Adrenal gland (tissue), 19 donors: ENCODE measurements at regions of chrX and their contacts with region 1.

Region 1: DNA sequence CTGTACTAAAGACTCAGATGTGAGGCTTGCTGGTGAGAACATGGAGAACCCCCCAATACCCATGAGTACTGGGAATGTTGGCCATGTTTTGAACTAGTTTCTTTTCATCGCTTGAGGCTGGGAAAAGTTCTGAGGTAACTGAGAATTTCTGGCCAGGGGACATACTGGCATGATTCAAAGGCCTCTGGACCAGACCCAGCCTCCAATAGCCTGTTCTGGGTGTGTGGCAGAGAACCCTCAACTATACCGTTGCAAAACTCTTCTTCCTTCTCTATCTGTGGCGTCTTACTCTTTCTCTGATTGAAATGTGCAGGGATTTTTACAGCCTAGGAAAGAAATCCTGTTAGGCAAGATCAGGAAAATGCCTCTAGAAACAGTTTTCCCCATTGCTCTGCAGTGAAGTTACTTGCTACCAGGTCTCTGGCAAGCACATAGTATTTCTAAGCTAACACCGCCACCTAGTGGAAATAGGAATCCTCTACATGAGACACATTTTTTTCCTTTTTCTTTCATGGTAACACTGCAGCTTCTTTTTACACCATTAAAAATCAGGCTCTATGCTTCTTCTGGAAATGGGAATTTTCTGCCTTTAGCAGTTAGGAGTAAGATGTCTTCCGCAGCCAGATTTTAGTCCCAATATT is 170.7 kb upstream of the ZCCHC13 start:
- DNase-seq: peak in 5 of 7 donors; percentile 8 to 31 (median 27)
- H3K4me3 ChIP-seq: no peak overlapping the region
- H3K27ac ChIP-seq: no peak overlapping the region
- H3K4me1 ChIP-seq: no peaks in the 10 kb centered on the region
- H3K27me3 ChIP-seq: no peaks in the 10 kb centered on the region
- CTCF ChIP-seq: peak; percentile 61 to 86 (median 75)
- POLR2A ChIP-seq: no peak

Region 2: GRCh38 chrX:73615022-73615421 is 518.3 kb before region 1 on chrX:
- intact Hi-C with region 1: no loop called
- DNase-seq: no peak
- H3K4me3 ChIP-seq: no peak overlapping the region
- H3K27ac ChIP-seq: no peak overlapping the region
- H3K4me1 ChIP-seq: no peaks in the 10 kb centered on the region
- H3K27me3 ChIP-seq: no peaks in the 10 kb centered on the region
- CTCF ChIP-seq: no peak
- POLR2A ChIP-seq: no peak

Region 3: GRCh38 chrX:74015379-74016019 is 117.8 kb before region 1 on chrX:
- intact Hi-C with region 1: no loop called
- DNase-seq: peak; percentile 62 to 83 (median 72)
- H3K4me3 ChIP-seq: no peak overlapping the region
- H3K27ac ChIP-seq: no peak overlapping the region
- H3K4me1 ChIP-seq: no peaks in the 10 kb centered on the region
- H3K27me3 ChIP-seq: no peaks in the 10 kb centered on the region
- CTCF ChIP-seq: peak; percentile 64 to 92 (median 82)
- POLR2A ChIP-seq: no peak

Region 4: DNA sequence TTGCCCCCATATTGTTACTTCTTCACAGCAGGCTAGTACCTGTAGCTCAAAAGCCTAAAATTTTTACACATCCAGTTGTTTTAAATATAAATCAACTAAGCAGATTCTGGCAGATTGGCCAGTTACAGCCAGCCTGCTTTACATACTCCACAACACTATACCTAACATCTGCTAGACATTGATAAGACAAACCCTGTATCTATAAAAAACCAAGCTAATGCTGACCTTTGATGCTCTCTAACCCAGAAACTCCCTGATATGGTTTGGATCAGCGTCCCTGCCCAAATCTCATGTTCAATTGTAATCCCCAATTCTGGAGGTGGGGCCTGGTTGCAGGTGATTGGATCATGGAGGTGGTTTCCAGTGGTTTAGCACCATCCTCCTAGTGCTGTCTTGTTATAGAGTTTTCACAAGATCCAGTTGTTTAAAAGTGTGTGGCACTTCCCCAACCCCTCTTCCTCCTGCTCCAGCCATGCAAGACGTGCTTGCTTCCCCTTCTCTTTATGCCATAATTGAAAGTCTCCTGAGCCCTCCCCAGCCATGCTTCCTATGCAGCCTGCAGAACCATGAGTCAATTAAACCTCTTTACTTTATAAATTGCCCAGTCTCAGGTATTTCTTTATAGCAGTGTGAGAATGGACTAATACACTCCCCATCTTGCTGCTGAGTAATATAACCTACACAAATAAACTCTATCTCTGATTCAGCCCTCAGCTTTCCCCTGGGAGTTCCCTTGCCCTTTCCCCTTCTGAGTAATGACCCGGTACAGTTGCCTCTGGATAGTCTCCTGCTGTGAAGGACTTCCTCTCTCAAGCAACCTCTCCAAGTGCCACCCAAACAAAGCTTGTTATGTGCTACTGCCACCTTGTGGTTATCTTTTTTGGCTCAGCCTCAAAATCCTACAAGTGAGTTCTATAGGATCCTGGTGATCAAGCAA is 210.3 kb after region 1 on chrX:
- intact Hi-C with region 1: loop called in 1 of 2 experiments (anchors 10 kb)
- DNase-seq: peak; percentile 53 to 79 (median 74)
- H3K4me3 ChIP-seq: no peak overlapping the region
- H3K27ac ChIP-seq: no peak overlapping the region
- H3K4me1 ChIP-seq: no peaks in the 10 kb centered on the region
- H3K27me3 ChIP-seq: peaks cover 9% of the 10 kb centered on the region
- CTCF ChIP-seq: peak; percentile 50 to 69 (median 60)
- POLR2A ChIP-seq: no peak